Panc1 (cell line): ENCODE measurements at regions of chr3 and their contacts with region 1.

Region 1: GRCh38 chr3:14402304-14402811 is at the start of gene SLC6A6:
- DNase-seq: no peak
- ATAC-seq: peak; percentile 81
- H3K4me3 ChIP-seq: peak within 1 kb of the TSS; percentile 87 to 88
- H3K27ac ChIP-seq: peak within 1 kb of the TSS; percentile 87
- H3K4me1 ChIP-seq: peaks cover 29% of the 10 kb centered on the region
- H3K27me3 ChIP-seq: no peaks in the 10 kb centered on the region
- CTCF ChIP-seq: no peak; the same call in 1 of the 2 replicates
- total RNA-seq, gene SLC6A6: 61.0 TPM

Region 2: GRCh38 chr3:14452679-14453367 is 50.5 kb after region 1 on chr3:
- CTCF ChIA-PET with region 1: interaction called, 3 read pairs
- POLR2A ChIA-PET with region 1: no interaction called
- in situ Hi-C with region 1: no loop called
- intact Hi-C with region 1: loop called (anchors 10 kb)
- DNase-seq: no peak
- ATAC-seq: peak; percentile 85
- H3K4me3 ChIP-seq: no peak overlapping the region
- H3K27ac ChIP-seq: peak overlapping the region; percentile 81
- H3K4me1 ChIP-seq: peaks cover 56% of the 10 kb centered on the region
- H3K27me3 ChIP-seq: no peaks in the 10 kb centered on the region
- CTCF ChIP-seq: no peak

Region 3: DNA sequence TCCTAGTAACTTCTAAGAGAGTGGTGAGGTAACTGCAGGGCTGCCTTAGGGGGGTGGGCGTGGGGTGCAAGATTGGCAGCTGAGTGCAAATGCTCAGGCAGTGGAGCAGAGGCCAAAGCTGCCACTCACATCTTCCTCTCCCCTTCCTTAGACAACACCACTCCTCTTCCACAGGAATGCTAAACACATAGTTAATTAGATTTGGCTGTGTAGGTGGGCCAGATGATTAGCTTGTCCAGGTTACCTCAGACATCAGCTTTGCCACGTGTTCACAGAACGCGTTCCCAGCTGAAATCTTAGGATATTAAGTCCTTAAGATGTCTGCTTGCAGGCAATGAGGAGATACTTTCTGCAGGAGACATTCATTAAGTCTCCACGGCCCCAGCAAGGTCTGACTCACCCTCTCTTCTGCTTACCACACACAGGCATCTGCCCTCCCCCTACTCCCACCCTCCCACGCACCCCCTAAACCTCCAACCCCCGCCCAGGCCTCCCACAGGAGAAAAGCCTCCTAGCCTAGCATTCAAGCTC is 224.6 kb after region 1 on chr3:
- CTCF ChIA-PET with region 1: no interaction called
- POLR2A ChIA-PET with region 1: no interaction called
- in situ Hi-C with region 1: no loop called
- intact Hi-C with region 1: no loop called
- DNase-seq: no peak
- ATAC-seq: no peak
- H3K4me3 ChIP-seq: no peak overlapping the region
- H3K27ac ChIP-seq: no peak overlapping the region
- H3K4me1 ChIP-seq: no peaks in the 10 kb centered on the region
- H3K27me3 ChIP-seq: no peaks in the 10 kb centered on the region
- CTCF ChIP-seq: no peak

Region 4: GRCh38 chr3:15512166-15512565 is 1109.8 kb after region 1 on chr3:
- CTCF ChIA-PET with region 1: no interaction called
- POLR2A ChIA-PET with region 1: no interaction called
- in situ Hi-C with region 1: no loop called
- intact Hi-C with region 1: no loop called
- DNase-seq: no peak
- ATAC-seq: no peak
- H3K4me3 ChIP-seq: no peak overlapping the region
- H3K27ac ChIP-seq: no peak overlapping the region
- H3K4me1 ChIP-seq: no peaks in the 10 kb centered on the region
- H3K27me3 ChIP-seq: no peaks in the 10 kb centered on the region
- CTCF ChIP-seq: no peak